Psoas muscle (tissue), 8 donors: ENCODE measurements at regions of chr2 and their contacts with region 1.

Region 1: DNA sequence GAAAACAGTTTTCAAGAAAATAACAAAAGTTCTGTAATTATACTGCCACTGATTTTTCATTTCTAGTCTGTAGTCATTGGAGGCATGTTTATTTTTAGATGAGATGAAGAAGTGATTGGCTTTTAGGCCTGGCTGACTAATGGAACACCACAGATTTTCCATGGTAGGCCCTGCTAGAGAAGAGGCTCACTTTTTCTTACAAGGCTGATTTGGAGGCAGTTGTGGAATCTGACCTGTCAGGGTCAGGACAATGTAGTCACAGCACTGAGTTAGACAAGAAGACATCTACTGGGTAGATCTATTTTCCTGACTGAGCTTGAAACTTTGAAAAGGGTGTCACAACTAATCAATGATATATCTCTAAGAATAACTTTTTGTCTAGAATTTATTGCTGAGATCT is 43.9 kb downstream of the KDM3A start:
- DNase-seq: no peak
- ATAC-seq: peak in 3 of 4 donors; percentile 35 to 49 (median 43)
- H3K4me3 ChIP-seq: no peak overlapping the region
- H3K27ac ChIP-seq: no peak overlapping the region
- H3K4me1 ChIP-seq: peaks cover 11% of the 10 kb centered on the region
- H3K27me3 ChIP-seq: no peaks in the 10 kb centered on the region
- CTCF ChIP-seq: no peak

Region 2: GRCh38 chr2:86417961-86418360 is 67.1 kb before region 1 on chr2:
- intact Hi-C with region 1: no loop called
- DNase-seq: no peak
- ATAC-seq: no peak
- H3K4me3 ChIP-seq: no peak overlapping the region
- H3K27ac ChIP-seq: no peak overlapping the region
- H3K4me1 ChIP-seq: peaks cover 14% of the 10 kb centered on the region
- H3K27me3 ChIP-seq: no peaks in the 10 kb centered on the region
- CTCF ChIP-seq: no peak

Region 3: DNA sequence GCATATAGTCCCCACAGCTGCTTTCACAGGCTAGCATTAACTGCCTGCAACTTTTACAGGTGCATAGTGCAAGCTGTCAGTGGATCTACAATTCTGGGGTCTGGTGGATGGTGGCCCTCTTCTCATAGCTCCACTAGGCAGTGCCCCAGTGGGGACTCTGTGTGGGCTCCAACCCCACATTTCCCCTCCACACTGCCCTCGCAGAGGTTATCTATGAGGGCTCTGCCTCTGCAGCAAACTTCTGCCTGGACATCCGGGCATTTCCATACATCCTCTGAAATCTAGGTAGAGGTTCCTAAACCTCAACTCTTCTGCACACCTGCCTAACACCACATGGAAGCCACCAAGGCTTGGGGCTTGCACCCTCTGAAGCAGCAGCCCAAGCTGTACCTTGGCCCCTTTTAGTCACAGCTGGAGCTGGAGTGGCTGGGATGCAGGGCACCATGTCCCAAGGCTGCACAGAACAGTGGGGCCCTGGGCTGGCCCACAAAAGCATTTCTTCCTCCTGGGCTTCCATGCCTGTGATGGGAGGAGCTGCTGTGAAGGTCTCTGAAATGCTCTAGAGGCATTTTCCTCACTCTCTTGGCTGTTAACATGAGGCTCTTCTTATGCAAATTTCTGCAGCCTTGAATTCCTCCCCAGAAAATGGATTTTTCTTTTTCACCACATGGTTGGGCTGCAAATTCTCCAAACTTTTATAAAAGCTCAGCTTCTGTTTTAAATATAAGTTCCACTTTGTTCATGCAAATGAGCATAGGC is 15.4 kb after region 1 on chr2:
- intact Hi-C with region 1: loop called in 1 of 2 experiments (anchors 2 kb)
- DNase-seq: no peak
- ATAC-seq: no peak
- H3K4me3 ChIP-seq: no peak overlapping the region
- H3K27ac ChIP-seq: no peak overlapping the region
- H3K4me1 ChIP-seq: no peaks in the 10 kb centered on the region
- H3K27me3 ChIP-seq: no peaks in the 10 kb centered on the region
- CTCF ChIP-seq: no peak